Ovary (tissue), 10 donors: ENCODE measurements at regions of chr3 and their contacts with region 1.

Region 1: DNA sequence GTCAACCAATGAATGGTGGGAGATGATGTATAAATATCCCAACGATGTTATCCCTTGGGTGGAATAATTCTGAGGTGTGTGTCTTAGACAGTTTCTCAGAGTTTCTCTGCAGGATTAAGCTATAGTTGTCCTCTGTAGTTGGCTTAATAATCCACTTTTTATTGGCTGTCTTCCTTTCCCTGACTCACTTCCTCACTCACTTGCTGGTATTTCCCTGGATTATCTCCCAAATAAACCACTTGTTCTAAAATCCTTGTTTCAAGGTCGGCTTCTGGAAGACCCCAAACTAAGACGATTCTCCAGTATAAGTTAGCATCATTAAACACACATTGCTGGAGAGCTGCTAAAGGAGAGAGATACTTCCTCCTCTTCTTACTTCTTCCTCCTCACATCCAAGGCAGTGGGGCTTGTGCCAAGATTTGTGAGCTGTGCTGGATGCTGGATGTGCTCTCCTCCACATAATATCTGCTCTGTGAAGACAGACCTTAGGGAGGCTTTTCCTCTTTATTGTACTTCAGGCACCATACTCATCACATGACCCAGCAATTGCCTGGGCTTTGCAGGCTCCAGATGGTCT is 22.5 kb upstream of the ROPN1 start:
- DNase-seq: peak in 2 of 5 donors; percentile 12 to 28
- H3K4me3 ChIP-seq: no peak overlapping the region
- H3K27ac ChIP-seq: no peak overlapping the region
- H3K4me1 ChIP-seq: no peaks in the 10 kb centered on the region
- H3K27me3 ChIP-seq: no peaks in the 10 kb centered on the region
- CTCF ChIP-seq: no peak
- EP300 ChIP-seq: no peak
- POLR2A ChIP-seq: no peak

Region 2: DNA sequence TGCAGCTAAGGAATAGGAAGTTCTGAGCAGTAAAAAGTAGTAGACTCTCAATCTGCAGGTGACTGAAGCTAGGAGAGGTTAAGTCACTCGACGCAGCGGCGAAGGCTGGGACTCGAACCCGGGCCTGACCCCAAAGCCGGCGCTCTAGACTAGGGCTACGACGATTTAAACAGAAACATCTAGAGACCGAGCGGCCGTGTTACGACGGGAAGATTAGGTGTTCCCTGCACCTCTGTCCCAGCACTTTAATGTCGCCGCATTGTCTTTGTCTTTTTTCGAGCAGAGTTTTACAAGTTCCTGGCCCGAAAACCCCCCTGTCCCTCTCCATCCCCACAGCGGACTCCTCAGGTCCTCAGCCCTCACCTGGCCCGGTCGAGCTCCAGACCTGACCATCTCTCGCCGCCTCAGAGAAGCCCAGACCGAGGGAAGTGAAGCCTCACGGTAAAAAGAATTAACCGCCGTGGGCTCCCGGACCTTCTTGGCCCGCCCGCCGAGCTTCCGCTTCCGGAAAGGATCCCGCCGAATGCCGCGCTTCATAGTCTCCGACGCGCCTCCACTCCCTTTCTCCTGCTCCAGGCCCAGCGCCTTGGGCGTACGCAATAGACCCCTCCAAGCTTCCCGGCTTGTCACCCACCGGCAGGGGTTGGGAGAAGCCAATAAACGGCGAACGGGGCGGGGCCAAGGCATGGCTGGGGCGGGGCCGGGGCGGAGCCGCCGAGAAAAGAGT is 53.5 kb before region 1 on chr3 and contains the start of gene CCDC14:
- intact Hi-C with region 1: no loop called
- DNase-seq: peak; percentile 93 to 95 (median 93)
- H3K4me3 ChIP-seq: peak within 1 kb of the TSS; percentile 74
- H3K27ac ChIP-seq: peak within 1 kb of the TSS; percentile 6 to 63
- H3K4me1 ChIP-seq: no peaks in the 10 kb centered on the region
- H3K27me3 ChIP-seq: no peaks in the 10 kb centered on the region
- CTCF ChIP-seq: no peak
- EP300 ChIP-seq: no peak
- POLR2A ChIP-seq: peak; percentile 36
- total RNA-seq, gene CCDC14: 19.9 to 32.1 (median 27.0) TPM

Region 3: GRCh38 chr3:124078953-124079911 is 64.8 kb after region 1 on chr3:
- intact Hi-C with region 1: loop called in 3 of 4 experiments (anchors 5 to 10 kb)
- DNase-seq: peak in 1 of 5 donors; percentile 22
- H3K4me3 ChIP-seq: no peak overlapping the region
- H3K27ac ChIP-seq: no peak overlapping the region
- H3K4me1 ChIP-seq: peaks cover 2% of the 10 kb centered on the region
- H3K27me3 ChIP-seq: no peaks in the 10 kb centered on the region
- CTCF ChIP-seq: peak; percentile 27 to 79 (median 57)
- EP300 ChIP-seq: no peak
- POLR2A ChIP-seq: no peak

Region 4: GRCh38 chr3:124084022-124084881 is 69.8 kb after region 1 on chr3:
- intact Hi-C with region 1: loop called in 3 of 4 experiments (anchors 5 to 10 kb)
- DNase-seq: no peak
- H3K4me3 ChIP-seq: no peak overlapping the region
- H3K27ac ChIP-seq: no peak overlapping the region
- H3K4me1 ChIP-seq: peaks cover 3% of the 10 kb centered on the region
- H3K27me3 ChIP-seq: no peaks in the 10 kb centered on the region
- CTCF ChIP-seq: no peak
- EP300 ChIP-seq: no peak
- POLR2A ChIP-seq: no peak

Region 5: GRCh38 chr3:124467980-124468902 is 453.8 kb after region 1 on chr3:
- intact Hi-C with region 1: loop called in 3 of 4 experiments (anchors 5 to 10 kb)
- DNase-seq: peak in 3 of 5 donors; percentile 23 to 56 (median 42)
- H3K4me3 ChIP-seq: no peak overlapping the region
- H3K27ac ChIP-seq: no peak overlapping the region
- H3K4me1 ChIP-seq: no peaks in the 10 kb centered on the region
- H3K27me3 ChIP-seq: no peaks in the 10 kb centered on the region
- CTCF ChIP-seq: peak; percentile 48 to 74 (median 48)
- EP300 ChIP-seq: no peak
- POLR2A ChIP-seq: no peak